Natural killer cell (primary cell): ENCODE measurements at regions of chr12 and their contacts with region 1.

Region 1: GRCh38 chr12:14365294-14366208 is at the start of gene ATF7IP:
- DNase-seq: peak; percentile 97 to 98
- ATAC-seq: peak; percentile 86 to 96 (median 88)
- H3K4me3 ChIP-seq: peak within 1 kb of the TSS; percentile 89
- H3K4me3 Mint-ChIP-seq: peak within 1 kb of the TSS; percentile 97
- H3K27ac ChIP-seq: peak within 1 kb of the TSS; percentile 97
- H3K27ac Mint-ChIP-seq: peak within 1 kb of the TSS; percentile 89 to 100
- H3K4me1 ChIP-seq: peaks cover 17% of the 10 kb centered on the region
- H3K4me1 Mint-ChIP-seq: peaks cover 31 to 43% of the 10 kb centered on the region in 2 donors
- H3K27me3 ChIP-seq: no peaks in the 10 kb centered on the region
- H3K27me3 Mint-ChIP-seq: no peaks in the 10 kb centered on the region
- CTCF ChIP-seq: no peak
- total RNA-seq, gene ATF7IP: 161 to 180 (median 173) TPM

Region 2: DNA sequence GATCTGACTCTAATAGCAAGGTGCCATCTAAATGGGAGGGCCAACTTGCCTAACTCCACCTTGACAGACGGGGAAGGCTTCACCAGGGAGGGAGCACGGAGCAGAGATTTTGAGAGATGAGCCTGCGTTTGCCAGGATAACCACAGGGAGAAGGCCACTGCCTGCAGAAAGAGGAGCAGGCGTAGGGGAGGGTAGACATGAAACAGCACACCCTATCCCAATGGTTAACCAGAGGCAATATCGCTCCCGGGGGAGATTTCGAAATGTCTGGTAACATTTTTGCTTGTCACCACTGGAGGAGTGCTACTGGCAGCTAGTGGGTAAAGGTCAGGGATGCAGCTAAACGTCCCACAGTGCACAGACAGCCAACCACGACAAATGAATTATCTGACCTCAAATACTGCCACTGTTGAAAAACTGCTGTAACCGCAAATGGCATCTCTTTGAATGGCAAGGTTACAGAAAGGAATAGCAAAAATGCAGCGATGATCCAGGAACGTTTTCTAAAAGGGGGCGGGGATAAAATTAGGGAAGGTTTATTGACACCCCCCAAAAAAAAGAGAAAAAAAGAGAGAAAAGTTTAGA is 126.1 kb before region 1 on chr12:
- intact Hi-C with region 1: loop called (anchors 5 kb)
- DNase-seq: peak; percentile 28 to 54
- ATAC-seq: peak; percentile 81 to 82 (median 82)
- H3K4me3 ChIP-seq: peak overlapping the region; percentile 12
- H3K4me3 Mint-ChIP-seq: peak overlapping the region; percentile 86
- H3K27ac ChIP-seq: peak overlapping the region; percentile 70
- H3K27ac Mint-ChIP-seq: peak overlapping the region; percentile 56 to 85
- H3K4me1 ChIP-seq: peaks cover 14% of the 10 kb centered on the region
- H3K4me1 Mint-ChIP-seq: peaks cover 16 to 25% of the 10 kb centered on the region in 2 donors
- H3K27me3 ChIP-seq: no peaks in the 10 kb centered on the region
- H3K27me3 Mint-ChIP-seq: no peaks in the 10 kb centered on the region
- CTCF ChIP-seq: no peak

Region 3: GRCh38 chr12:14272956-14273907 is 92.3 kb before region 1 on chr12:
- intact Hi-C with region 1: no loop called
- DNase-seq: peak in 1 of 2 donors; percentile 18
- ATAC-seq: peak; percentile 59 to 73 (median 69)
- H3K4me3 ChIP-seq: no peak overlapping the region
- H3K4me3 Mint-ChIP-seq: peak overlapping the region; percentile 64
- H3K27ac ChIP-seq: peak overlapping the region; percentile 48
- H3K27ac Mint-ChIP-seq: peak overlapping the region; percentile 80 to 85
- H3K4me1 ChIP-seq: peaks cover 11% of the 10 kb centered on the region
- H3K4me1 Mint-ChIP-seq: peaks cover 15 to 22% of the 10 kb centered on the region in 2 donors
- H3K27me3 ChIP-seq: no peaks in the 10 kb centered on the region
- H3K27me3 Mint-ChIP-seq: no peaks in the 10 kb centered on the region
- CTCF ChIP-seq: no peak

Region 4: GRCh38 chr12:14384783-14385638 is 19.5 kb after region 1 on chr12:
- intact Hi-C with region 1: loop called (anchors 1 kb)
- DNase-seq: peak; percentile 39 to 89
- ATAC-seq: peak; percentile 92 to 94 (median 93)
- H3K4me3 ChIP-seq: peak overlapping the region; percentile 30
- H3K4me3 Mint-ChIP-seq: peak overlapping the region; percentile 77
- H3K27ac ChIP-seq: peak overlapping the region; percentile 70
- H3K27ac Mint-ChIP-seq: peak overlapping the region; percentile 93 to 95
- H3K4me1 ChIP-seq: peaks cover 18% of the 10 kb centered on the region
- H3K4me1 Mint-ChIP-seq: peaks cover 51 to 53% of the 10 kb centered on the region in 2 donors
- H3K27me3 ChIP-seq: no peaks in the 10 kb centered on the region
- H3K27me3 Mint-ChIP-seq: no peaks in the 10 kb centered on the region
- CTCF ChIP-seq: no peak

Region 5: DNA sequence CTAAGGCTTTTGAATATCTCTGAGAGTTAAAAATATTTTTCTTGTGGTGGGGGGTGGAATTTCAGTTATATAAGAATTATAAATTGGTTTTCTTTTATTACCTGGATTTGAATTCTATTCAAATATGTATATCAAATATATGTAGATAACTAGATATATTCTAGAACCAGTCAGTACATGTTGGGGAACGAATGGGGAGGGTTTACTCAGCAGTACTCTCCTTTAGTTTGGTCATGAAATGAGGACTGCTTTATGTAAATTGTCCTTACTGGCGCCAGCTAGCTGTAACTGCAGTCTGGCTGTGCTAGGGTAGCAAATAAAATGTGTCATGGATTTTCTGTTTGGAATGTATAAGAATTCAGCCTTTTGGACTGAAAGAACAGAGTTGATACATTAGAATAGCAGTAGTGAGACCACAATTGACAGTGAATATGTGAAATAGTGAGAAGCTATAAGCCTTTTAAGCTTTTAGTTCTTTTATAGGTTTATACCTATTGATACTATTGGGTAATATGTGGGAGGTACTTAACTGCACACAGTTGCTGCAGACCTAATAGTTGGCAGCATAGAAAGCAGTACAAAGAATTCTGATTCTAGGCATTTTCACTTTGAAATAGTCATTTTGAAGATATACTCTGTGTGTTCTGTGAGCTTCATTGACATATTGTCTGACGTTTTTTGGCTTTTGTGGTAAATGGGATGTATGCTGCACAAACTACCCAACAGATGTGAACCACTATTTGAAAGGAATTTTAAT is 28.9 kb after region 1 on chr12:
- intact Hi-C with region 1: loop called (anchors 1 kb)
- DNase-seq: peak in 1 of 2 donors; percentile 83
- ATAC-seq: peak; percentile 55 to 73 (median 63)
- H3K4me3 ChIP-seq: peak overlapping the region; percentile 9
- H3K4me3 Mint-ChIP-seq: peak overlapping the region; percentile 92
- H3K27ac ChIP-seq: peak overlapping the region; percentile 85
- H3K27ac Mint-ChIP-seq: peak overlapping the region; percentile 85 to 93
- H3K4me1 ChIP-seq: peaks cover 25% of the 10 kb centered on the region
- H3K4me1 Mint-ChIP-seq: peaks cover 54 to 80% of the 10 kb centered on the region in 2 donors
- H3K27me3 ChIP-seq: no peaks in the 10 kb centered on the region
- H3K27me3 Mint-ChIP-seq: no peaks in the 10 kb centered on the region
- CTCF ChIP-seq: no peak

Region 6: GRCh38 chr12:14417715-14418114 is 52.2 kb after region 1 on chr12:
- intact Hi-C with region 1: loop called (anchors 1 kb)
- DNase-seq: peak; percentile 59 to 89
- ATAC-seq: peak; percentile 49 to 66 (median 63)
- H3K4me3 ChIP-seq: no peak overlapping the region
- H3K4me3 Mint-ChIP-seq: peak overlapping the region; percentile 86
- H3K27ac ChIP-seq: peak overlapping the region; percentile 42
- H3K27ac Mint-ChIP-seq: peak overlapping the region; percentile 89 to 90
- H3K4me1 ChIP-seq: peaks cover 14% of the 10 kb centered on the region
- H3K4me1 Mint-ChIP-seq: peaks cover 56 to 59% of the 10 kb centered on the region in 2 donors
- H3K27me3 ChIP-seq: no peaks in the 10 kb centered on the region
- H3K27me3 Mint-ChIP-seq: no peaks in the 10 kb centered on the region
- CTCF ChIP-seq: no peak